Left lung (tissue), 14 donors: ENCODE measurements at regions of chr5 and their contacts with region 1.

Region 1: DNA sequence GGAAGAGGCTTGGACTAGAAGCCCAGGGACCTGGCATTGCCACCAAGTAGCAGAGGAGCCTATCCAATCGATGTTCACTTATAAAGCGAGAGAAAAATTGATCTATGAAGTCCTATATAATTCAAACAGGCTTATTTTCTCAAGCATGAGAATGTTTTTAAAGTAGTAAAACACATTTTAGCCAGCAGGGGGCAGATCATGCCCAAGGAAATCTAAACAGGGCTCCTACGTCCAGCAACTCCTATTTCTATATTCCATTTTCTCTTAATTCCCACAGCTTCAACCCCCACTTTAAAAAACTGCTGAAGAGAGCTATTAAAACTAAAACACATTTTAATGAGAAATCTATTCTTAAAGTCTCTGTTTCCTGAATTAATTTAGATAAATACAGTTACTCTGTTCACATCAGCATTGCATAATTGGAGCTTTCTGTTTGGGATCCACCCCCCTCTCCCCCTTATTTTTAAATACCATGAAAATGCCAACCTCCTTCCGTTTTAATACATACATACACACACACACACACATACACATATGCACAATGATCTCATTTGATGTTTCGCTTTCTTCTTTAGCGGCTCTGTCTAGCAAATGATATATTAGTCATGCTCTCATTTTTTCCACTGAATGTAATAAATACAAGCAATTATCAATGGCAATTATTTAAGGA is 144.9 kb downstream of the MYO10 start:
- DNase-seq: peak in 2 of 4 donors; percentile 67 to 76
- ATAC-seq: peak; percentile 80
- H3K4me3 ChIP-seq: no peak overlapping the region
- H3K27ac ChIP-seq: peak overlapping the region in 1 of 2 donors; percentile 34
- H3K4me1 ChIP-seq: peaks cover 0 to 4% of the 10 kb centered on the region in 2 donors
- H3K27me3 ChIP-seq: no peaks in the 10 kb centered on the region
- CTCF ChIP-seq: peak; percentile 52 to 68

Region 2: GRCh38 chr5:16934123-16934522 is 143.0 kb after region 1 on chr5:
- intact Hi-C with region 1: loop called in 1 of 2 experiments (anchors 10 kb)
- DNase-seq: peak in 2 of 4 donors; percentile 59 to 83
- ATAC-seq: peak; percentile 53
- H3K4me3 ChIP-seq: peak overlapping the region; percentile 57 to 68
- H3K27ac ChIP-seq: no peak overlapping the region
- H3K4me1 ChIP-seq: peaks cover 27 to 57% of the 10 kb centered on the region in 2 donors
- H3K27me3 ChIP-seq: peaks cover 0 to 44% of the 10 kb centered on the region in 2 donors
- CTCF ChIP-seq: peak; percentile 86 to 91

Region 3: DNA sequence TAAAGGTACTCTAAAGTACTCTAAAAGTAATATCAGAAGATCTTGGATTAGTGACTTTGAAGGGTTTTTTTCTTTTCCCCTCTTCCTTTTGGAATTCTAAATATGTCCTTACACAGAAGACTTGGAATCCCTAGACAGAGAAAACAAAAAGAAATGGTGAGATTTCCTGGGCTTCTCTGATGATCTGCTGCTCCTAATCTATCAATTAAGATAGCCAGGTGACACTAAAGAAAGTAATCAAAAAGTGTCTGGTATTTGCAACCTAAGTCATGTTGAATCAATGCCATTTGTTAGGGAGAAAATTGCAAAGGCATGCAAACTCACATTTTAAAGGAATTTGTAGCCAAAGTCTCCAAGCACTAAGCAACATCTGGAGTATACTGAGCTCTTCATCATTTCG is 174.4 kb after region 1 on chr5:
- intact Hi-C with region 1: no loop called
- DNase-seq: no peak
- ATAC-seq: no peak
- H3K4me3 ChIP-seq: no peak overlapping the region
- H3K27ac ChIP-seq: no peak overlapping the region
- H3K4me1 ChIP-seq: no peaks in the 10 kb centered on the region
- H3K27me3 ChIP-seq: no peaks in the 10 kb centered on the region
- CTCF ChIP-seq: no peak